Activated naive CD8-positive, alpha-beta T cell treated with anti-CD3 and anti-CD28 coated beads, Interleukin-2, amount 10 ng/mL, durations not matched to agents 7 days and 5 days (primary cell): ENCODE measurements at regions of chr2 and their contacts with region 1.

Region 1: DNA sequence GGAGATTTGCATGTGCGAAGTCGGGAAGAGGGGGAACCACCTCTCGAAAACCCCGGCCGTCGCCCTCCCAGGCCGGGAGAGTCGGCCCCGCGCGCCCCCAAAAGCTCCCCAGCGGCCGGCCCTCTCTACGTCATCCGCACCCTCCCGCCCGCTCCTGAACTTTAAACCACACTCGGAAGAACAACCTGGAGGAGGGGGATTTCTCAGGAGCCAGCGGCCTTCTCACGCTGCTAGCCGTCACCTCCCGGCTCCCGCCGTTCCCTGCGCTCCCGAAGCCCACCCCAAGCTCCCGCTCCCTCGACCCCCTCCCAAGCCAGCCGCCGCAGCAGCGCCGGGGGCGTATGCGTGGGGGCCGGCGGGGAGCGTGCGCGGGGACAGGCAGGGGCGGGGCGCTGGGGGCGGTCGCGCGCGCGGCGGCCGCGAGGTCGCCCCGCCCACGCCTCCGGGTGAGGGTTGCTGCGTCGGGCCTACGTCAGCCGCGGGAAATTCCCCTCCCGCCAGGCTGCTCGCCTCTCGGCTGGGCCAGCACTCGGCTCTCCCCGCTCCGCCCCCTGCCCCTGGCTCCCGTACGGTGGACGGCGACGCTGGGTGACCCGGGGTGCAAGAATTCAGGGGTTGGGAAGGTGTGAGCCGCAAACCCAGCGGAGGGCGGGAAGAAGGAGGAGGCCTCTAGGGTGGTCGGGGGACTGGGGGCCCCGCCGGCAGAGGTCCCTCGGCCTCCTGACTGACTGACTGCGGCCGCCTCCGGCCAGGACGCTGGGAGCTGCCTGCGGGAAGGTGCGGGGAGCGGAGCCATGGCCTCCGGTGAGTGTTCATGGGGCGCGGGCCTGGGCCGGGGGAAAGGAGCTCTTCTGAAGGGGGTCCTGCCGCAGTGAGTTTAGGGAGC is at the start of gene REL:
- DNase-seq: peak; percentile 94
- ATAC-seq: peak; percentile 85
- H3K4me3 Mint-ChIP-seq: peak within 1 kb of the TSS; percentile 100
- H3K27ac Mint-ChIP-seq: peak within 1 kb of the TSS; percentile 99
- H3K4me1 Mint-ChIP-seq: peaks cover 18% of the 10 kb centered on the region
- H3K27me3 Mint-ChIP-seq: no peaks in the 10 kb centered on the region
- total RNA-seq, gene REL: 27.9 to 28.8 TPM

Region 2: DNA sequence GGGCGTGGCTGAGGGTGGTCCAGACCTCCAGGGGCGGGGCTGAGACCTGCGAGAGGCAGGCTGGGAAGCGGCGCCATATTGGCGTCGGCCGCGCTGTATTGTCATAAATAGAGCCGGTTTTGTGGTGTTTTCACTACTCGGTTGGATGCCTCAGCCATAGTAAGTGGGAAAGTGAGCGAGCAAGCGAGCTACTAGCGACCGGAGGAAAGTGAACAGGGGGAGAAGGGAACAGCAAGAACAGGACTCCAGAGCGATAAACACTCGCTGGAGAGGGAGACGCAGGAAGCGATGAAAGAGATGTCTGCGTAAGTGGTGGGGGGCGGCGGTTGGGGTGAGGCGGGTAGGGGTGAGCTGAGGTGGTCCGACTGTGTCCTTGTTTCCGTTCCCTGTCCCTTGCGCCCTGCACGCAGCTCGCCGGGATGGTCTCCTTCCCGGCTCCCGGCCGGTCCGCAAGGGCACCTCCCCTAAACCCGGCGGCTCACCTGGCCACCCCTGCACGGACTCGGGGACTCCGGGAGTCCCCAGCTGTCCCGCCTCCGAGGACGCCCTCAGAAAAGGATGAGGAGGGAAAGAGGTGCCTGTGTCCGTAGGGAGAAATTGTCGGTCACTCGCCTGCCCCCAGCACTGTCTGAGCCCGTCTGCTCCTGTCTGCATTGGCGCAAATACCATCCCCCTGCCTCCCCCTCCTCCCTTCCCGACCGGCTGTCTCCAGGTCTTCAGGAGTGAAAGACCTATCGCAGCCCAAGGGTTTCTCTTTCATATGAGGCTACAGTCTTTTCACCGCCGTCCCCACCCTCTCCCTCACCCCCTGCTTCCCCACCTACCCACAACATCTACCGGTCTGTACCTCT is 124.9 kb before region 1 on chr2 and contains the start of gene PAPOLG:
- POLR2A ChIA-PET with region 1: interaction called, 12 read pairs
- DNase-seq: peak; percentile 97
- ATAC-seq: peak; percentile 98
- H3K4me3 Mint-ChIP-seq: peak within 1 kb of the TSS; percentile 100
- H3K27ac Mint-ChIP-seq: peak within 1 kb of the TSS; percentile 99
- H3K4me1 Mint-ChIP-seq: peaks cover 21% of the 10 kb centered on the region
- H3K27me3 Mint-ChIP-seq: no peaks in the 10 kb centered on the region
- total RNA-seq, gene PAPOLG: 25.9 to 26.2 TPM

Region 3: DNA sequence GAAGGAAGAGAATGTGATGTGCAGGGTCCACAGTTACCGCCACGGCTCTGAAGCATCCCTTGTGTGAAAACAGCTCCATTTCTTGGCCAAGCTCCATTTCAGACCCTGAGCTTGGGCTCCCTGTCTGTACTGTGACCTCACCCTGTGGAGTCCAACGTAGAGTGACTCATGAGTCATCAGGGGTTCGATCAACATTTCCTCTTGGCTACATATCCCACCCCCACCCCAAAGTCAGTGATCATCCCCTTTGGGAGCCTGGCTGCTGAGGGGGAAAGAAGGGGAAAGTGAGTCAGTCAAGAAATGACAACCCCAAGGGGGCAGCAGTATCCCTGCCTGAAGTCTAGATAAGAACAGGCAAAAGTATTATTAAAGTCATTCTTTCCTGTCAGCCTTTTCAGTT is 63.0 kb before region 1 on chr2:
- POLR2A ChIA-PET with region 1: interaction called, 34 read pairs
- DNase-seq: no peak
- ATAC-seq: no peak
- H3K4me3 Mint-ChIP-seq: no peak overlapping the region
- H3K27ac Mint-ChIP-seq: peak overlapping the region; percentile 98
- H3K4me1 Mint-ChIP-seq: peaks cover 43% of the 10 kb centered on the region
- H3K27me3 Mint-ChIP-seq: no peaks in the 10 kb centered on the region

Region 4: DNA sequence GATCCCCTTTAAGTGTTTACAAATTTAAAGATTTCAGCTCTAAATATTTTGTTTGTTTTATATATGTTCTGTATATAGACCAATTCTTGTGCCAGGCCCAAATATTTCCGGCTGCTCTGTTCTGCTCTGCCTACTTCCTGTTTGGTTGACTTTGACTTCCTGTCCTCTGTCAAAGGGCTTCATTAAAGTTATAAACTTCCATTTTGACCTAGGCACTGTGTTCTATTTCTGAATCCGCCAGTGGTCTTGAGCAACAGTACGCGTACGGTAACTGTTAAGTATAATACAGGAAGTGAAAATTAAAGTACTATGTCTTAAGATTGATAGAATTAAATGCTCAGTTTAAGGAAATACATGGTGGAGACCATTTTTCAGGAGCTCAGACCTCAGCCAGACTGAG is 13.4 kb before region 1 on chr2:
- POLR2A ChIA-PET with region 1: interaction called, 17 read pairs
- DNase-seq: no peak
- ATAC-seq: peak; percentile 96
- H3K4me3 Mint-ChIP-seq: peak overlapping the region; percentile 62
- H3K27ac Mint-ChIP-seq: peak overlapping the region; percentile 92
- H3K4me1 Mint-ChIP-seq: peaks cover 14% of the 10 kb centered on the region
- H3K27me3 Mint-ChIP-seq: no peaks in the 10 kb centered on the region

Region 5: GRCh38 chr2:60966507-60967405 is 85.5 kb after region 1 on chr2:
- POLR2A ChIA-PET with region 1: interaction called, 13 read pairs
- DNase-seq: no peak
- ATAC-seq: peak; percentile 27
- H3K4me3 Mint-ChIP-seq: peak overlapping the region; percentile 71
- H3K27ac Mint-ChIP-seq: peak overlapping the region; percentile 75
- H3K4me1 Mint-ChIP-seq: peaks cover 33% of the 10 kb centered on the region
- H3K27me3 Mint-ChIP-seq: no peaks in the 10 kb centered on the region

Region 6: GRCh38 chr2:60998628-60999545 is 117.6 kb after region 1 on chr2:
- POLR2A ChIA-PET with region 1: interaction called, 11 read pairs
- DNase-seq: no peak
- ATAC-seq: peak; percentile 61
- H3K4me3 Mint-ChIP-seq: no peak overlapping the region
- H3K27ac Mint-ChIP-seq: no peak overlapping the region
- H3K4me1 Mint-ChIP-seq: no peaks in the 10 kb centered on the region
- H3K27me3 Mint-ChIP-seq: no peaks in the 10 kb centered on the region

Region 7: DNA sequence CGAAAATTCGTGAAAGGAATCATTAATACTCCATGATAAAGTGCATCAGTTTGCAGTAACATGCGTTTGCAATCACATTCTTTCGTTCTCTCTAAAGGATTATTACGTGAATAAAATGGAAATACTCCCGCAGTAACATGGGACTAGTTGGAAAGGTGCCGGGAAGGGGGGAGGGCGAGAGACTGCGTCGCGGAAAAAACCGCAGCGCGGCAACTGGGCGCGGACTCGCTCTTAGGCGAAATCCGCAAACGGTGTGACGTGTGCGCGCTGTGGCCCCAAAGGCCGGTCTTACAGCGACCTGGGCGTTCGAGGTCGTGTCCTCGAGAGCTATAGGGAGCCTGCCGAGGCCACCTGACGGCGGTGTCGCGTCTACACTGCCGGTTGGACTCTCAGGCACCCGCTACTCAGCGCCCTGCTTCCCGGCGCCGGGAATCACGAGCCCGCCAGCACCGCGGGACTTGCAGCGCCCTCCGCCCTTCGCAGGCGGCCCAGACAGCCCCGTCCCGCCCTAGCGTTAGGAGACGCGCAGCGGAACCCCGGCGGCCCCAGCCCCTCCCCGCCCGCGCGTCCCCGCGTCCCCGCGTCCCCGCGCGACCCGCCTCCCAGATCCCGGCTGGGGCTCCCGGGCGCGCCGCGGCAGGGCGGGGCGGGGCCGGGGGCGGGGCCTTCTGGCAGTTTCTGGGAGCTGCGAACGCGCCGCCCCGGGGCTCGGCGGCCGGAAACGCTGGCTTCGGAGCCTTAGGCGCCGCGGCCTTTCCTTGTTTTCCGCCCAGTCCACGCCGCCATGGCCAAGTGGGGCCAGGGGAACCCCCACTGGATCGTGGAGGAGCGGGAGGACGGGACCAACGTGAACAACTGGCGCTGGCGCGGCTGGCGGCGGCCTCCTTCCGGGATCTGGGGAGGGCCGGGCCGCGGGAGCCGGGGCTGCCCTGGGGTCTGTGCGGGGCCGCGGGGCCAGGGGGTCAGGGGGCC is 295.8 kb after region 1 on chr2:
- POLR2A ChIA-PET with region 1: interaction called, 16 read pairs
- DNase-seq: peak; percentile 99
- ATAC-seq: peak; percentile 89
- H3K4me3 Mint-ChIP-seq: peak overlapping the region; percentile 94
- H3K27ac Mint-ChIP-seq: peak overlapping the region; percentile 78
- H3K4me1 Mint-ChIP-seq: peaks cover 39% of the 10 kb centered on the region
- H3K27me3 Mint-ChIP-seq: peaks cover 8% of the 10 kb centered on the region